A549 (cell line): ENCODE measurements at regions of chr2 and their contacts with region 1.

Region 1: GRCh38 chr2:26330113-26330549 is 15.8 kb upstream of the SELENOI start:
- DNase-seq: peak; percentile 84 to 89
- ATAC-seq: peak; percentile 98 to 99
- H3K4me3 ChIP-seq: no peak overlapping the region
- H3K27ac ChIP-seq: no peak overlapping the region
- H3K4me1 ChIP-seq: peaks cover 8% of the 10 kb centered on the region
- CTCF ChIP-seq: peak; percentile 94
- EP300 ChIP-seq: no peak
- POLR2A ChIP-seq: no peak
- RAD21 ChIP-seq: peak; percentile 82 to 84

Region 2: GRCh38 chr2:26235085-26235484 is 95.0 kb before region 1 on chr2:
- CTCF ChIA-PET with region 1: interaction called, 15 read pairs
- POLR2A ChIA-PET with region 1: no interaction called
- DNase-seq: peak in 1 of 2 experiments; percentile 25
- ATAC-seq: peak in 1 of 2 experiments; percentile 60; a peak in 3 of 6 replicates
- H3K4me3 ChIP-seq: no peak overlapping the region
- H3K27ac ChIP-seq: no peak overlapping the region
- H3K4me1 ChIP-seq: peaks cover 10% of the 10 kb centered on the region
- CTCF ChIP-seq: peak; percentile 32; the same call in 2 of the 3 replicates
- EP300 ChIP-seq: no peak
- POLR2A ChIP-seq: no peak
- RAD21 ChIP-seq: peak; percentile 33 to 47; a peak in 4 of 5 replicates

Region 3: DNA sequence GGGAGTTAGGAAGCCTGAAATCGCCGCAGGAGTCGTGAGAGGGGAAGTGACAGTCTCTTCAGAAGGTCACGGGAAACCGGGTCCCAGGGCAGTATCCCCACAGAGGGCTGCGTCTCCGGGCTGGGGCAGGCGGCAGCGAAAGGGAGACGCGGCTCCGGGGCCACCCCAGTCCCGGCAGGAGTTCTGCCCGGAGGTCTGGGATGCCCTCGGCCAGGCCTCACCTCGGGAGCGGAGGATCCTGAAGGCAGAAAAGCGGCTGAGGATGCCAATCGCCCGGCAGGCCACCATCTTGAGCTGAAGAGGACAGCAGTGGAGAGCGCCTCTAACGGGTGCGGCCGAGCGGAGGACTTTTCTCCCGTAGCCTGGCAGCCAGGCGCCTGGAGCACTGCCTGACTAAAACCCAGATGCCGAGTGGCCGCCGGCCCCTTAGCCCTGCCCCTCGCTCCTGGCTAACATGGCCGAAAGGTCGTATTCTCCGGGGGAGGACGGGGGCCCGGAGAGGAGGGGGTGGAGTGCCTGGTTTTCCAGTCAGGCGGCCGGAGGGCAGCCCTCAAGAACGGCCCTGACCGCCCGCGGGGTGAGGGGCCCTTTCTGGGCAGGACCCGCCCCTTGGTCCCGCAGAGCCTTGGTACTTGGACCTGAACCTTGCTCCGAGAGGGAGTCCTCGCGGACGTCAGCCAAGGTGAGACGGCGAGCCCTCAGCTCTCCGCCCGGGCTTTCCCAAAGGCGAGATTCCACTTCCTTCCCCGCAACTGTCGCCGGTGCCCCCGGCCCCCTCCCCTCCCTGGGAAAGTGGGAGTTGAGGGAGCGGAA is 85.6 kb before region 1 on chr2 and contains the starts of genes HADHA and HADHB:
- CTCF ChIA-PET with region 1: interaction called, 13 read pairs
- POLR2A ChIA-PET with region 1: no interaction called
- DNase-seq: peak; percentile 81 to 97
- ATAC-seq: peak; percentile 92 to 97
- H3K4me3 ChIP-seq: peak within 1 kb of the TSS; percentile 74
- H3K27ac ChIP-seq: peak within 1 kb of the TSS; percentile 77 to 94
- H3K4me1 ChIP-seq: peaks cover 34% of the 10 kb centered on the region
- CTCF ChIP-seq: peak; percentile 21; the same call in 1 of the 3 replicates
- EP300 ChIP-seq: no peak
- POLR2A ChIP-seq: peak; percentile 83
- RAD21 ChIP-seq: peak; percentile 3 to 17; a peak in 1 of 5 replicates
- polyA plus RNA-seq, gene HADHA: 161 and 174 TPM in 2 replicates
- polyA plus RNA-seq, gene HADHB: 161 and 173 TPM in 2 replicates

Region 4: DNA sequence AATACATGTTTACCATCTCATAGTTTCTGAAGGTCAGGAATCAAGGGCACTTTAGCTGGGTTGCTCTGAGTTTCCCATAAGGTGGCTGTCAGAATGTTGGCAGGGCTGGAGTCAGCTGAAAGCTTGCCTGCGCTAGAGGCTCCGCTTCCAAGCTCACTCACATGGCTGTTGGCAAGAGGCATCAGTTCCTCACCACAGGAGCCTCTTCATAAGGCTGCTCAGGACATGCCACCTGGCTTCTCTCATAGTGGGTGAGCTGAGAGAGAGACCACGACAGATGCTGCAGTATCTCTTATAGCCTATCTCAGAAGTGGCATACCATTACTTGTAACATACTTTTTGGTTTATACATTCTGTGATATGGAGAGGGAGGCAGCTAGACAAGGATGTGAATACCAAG is 78.2 kb before region 1 on chr2:
- CTCF ChIA-PET with region 1: interaction called, 10 read pairs
- POLR2A ChIA-PET with region 1: no interaction called
- DNase-seq: no peak
- ATAC-seq: peak in 1 of 2 experiments; percentile 19; a peak in 1 of 6 replicates
- H3K4me3 ChIP-seq: no peak overlapping the region
- H3K27ac ChIP-seq: no peak overlapping the region
- H3K4me1 ChIP-seq: peaks cover 3% of the 10 kb centered on the region; the same call in 2 of the 3 replicates
- CTCF ChIP-seq: no peak
- EP300 ChIP-seq: no peak
- POLR2A ChIP-seq: no peak
- RAD21 ChIP-seq: no peak

Region 5: DNA sequence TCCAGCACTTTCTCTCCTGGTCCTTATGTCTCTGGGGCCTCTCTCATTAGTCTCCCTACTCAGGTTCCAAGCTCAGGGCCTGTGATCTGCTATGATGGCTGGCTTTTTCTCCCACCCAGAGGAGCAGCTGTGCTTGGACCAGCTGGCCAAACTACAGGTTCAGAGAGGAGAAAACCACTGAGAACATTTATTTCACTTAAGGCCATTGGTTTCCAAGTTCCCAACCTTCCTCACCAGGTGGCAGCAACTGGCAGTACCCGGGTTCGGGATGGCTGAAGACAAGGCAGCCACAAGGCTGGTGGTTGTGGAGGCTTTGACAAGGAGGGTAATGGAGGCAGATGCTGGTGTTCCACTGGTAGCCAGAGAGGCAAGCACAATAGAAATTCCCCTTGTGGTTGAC is 14.1 kb before region 1 on chr2:
- CTCF ChIA-PET with region 1: interaction called, 156 read pairs
- POLR2A ChIA-PET with region 1: no interaction called
- DNase-seq: peak; percentile 35 to 64
- ATAC-seq: peak; percentile 48 to 73
- H3K4me3 ChIP-seq: no peak overlapping the region
- H3K27ac ChIP-seq: no peak overlapping the region
- H3K4me1 ChIP-seq: no peaks in the 10 kb centered on the region
- CTCF ChIP-seq: peak; percentile 44
- EP300 ChIP-seq: no peak
- POLR2A ChIP-seq: no peak
- RAD21 ChIP-seq: peak; percentile 46 to 60; a peak in 3 of 5 replicates

Region 6: GRCh38 chr2:26345545-26346453 is 15.7 kb after region 1 on chr2 and contains the start of gene SELENOI:
- CTCF ChIA-PET with region 1: interaction called, 15 read pairs
- POLR2A ChIA-PET with region 1: interaction called, 4 read pairs
- DNase-seq: peak; percentile 91 to 100
- ATAC-seq: peak; percentile 93 to 97
- H3K4me3 ChIP-seq: peak within 1 kb of the TSS; percentile 76
- H3K27ac ChIP-seq: peak within 1 kb of the TSS; percentile 88 to 95
- H3K4me1 ChIP-seq: peaks cover 39% of the 10 kb centered on the region
- CTCF ChIP-seq: no peak
- EP300 ChIP-seq: no peak
- POLR2A ChIP-seq: peak; percentile 98
- RAD21 ChIP-seq: peak in 1 of 2 experiments; percentile 25; a peak in 1 of 5 replicates
- polyA plus RNA-seq, gene SELENOI: 30.5 and 38.7 TPM in 2 replicates